Sciatic nerve (tissue), 2 donors: ENCODE measurements at regions of chr14 and their contacts with region 1.

Region 1: DNA sequence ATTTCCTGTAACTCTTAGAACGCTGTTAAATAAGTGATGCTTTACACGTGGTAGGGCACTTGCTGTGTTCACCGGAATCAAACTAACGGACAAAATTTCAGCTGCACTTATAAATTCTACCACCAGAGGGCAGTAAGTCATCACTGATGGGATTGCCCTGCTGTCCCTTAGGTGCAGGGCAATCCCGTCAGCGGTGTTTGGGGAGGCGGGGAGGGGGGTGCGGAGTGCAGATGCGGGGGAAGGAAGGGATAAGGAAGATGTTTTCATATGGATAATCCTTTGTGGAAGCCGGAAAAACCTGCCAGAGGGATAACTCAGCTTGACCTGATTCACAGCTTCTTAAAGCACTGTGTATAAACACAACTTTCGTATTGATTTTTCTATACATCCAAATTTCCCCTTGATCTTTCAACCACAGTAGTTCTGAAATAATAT is 21.7 kb upstream of the SLC10A1 start:
- DNase-seq: no peak
- ATAC-seq: peak; percentile 81

Region 2: GRCh38 chr14:69741055-69741454 is 77.7 kb before region 1 on chr14:
- intact Hi-C with region 1: no loop called
- DNase-seq: no peak
- ATAC-seq: no peak

Region 3: GRCh38 chr14:70027785-70028428 is 209.1 kb after region 1 on chr14:
- intact Hi-C with region 1: loop called (anchors 2 kb)
- DNase-seq: peak; percentile 88
- ATAC-seq: peak; percentile 83